MCF 10A (cell line): ENCODE measurements at regions of chr5 and their contacts with region 1.

Region 1: DNA sequence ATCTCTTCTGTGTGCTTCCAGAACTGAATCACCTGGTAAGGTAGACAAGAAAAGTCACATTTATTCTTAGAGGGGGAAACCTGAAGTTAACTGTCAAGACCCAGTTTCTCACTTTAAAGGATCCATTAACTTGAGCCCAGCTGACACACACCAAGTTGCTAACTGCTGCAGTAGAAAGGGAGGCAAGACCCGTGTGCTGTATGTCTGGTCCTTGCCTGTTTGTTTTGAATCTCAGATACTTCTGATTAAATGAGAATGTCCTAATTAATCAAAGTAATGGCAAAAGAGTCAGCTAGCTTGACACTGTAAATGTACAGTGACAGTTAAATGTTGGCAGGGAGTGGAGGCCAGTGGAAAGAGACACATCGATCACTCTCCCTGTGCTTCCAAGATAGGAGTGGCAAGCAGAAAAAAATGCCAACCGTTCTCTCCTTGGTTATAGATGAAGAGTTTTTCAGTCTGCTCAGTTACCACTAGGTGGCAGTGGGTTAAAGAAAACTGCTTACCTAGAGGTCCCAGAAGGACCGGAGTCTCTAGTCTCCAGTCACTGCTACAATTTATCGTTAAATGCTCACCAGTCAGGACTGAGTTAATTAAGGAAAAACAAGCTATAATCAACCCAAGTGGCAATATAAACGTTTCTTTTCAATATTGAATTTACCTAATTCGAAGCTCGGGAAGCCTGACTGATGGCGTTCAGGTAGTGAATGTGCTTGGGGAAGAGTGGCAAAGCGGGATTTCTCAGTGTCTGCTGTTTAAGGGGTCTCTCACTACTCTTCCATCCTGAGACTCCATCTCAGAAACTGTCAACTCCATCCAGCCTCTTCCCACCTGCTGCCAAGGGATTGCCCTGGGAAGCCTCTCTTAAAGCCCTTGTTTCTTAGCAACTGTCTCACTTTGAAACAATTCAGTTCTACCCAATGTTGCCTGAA is 18.4 kb downstream of the LSM11 start:
- DNase-seq: peak; percentile 79
- H3K4me3 Mint-ChIP-seq: no peak overlapping the region
- H3K27ac Mint-ChIP-seq: no peak overlapping the region
- H3K4me1 Mint-ChIP-seq: peaks cover 1% of the 10 kb centered on the region
- H3K27me3 Mint-ChIP-seq: no peaks in the 10 kb centered on the region
- CTCF ChIP-seq: peak; percentile 91

Region 2: GRCh38 chr5:157659868-157660660 is 101.9 kb before region 1 on chr5:
- CTCF ChIA-PET with region 1: no interaction called
- POLR2A ChIA-PET with region 1: no interaction called
- intact Hi-C with region 1: no loop called
- DNase-seq: no peak
- H3K4me3 Mint-ChIP-seq: no peak overlapping the region
- H3K27ac Mint-ChIP-seq: no peak overlapping the region
- H3K4me1 Mint-ChIP-seq: no peaks in the 10 kb centered on the region
- H3K27me3 Mint-ChIP-seq: no peaks in the 10 kb centered on the region
- CTCF ChIP-seq: no peak

Region 3: GRCh38 chr5:157772127-157772526 is 10.2 kb after region 1 on chr5:
- CTCF ChIA-PET with region 1: interaction called, 52 read pairs
- POLR2A ChIA-PET with region 1: interaction called, 6 read pairs
- intact Hi-C with region 1: no loop called
- DNase-seq: no peak
- H3K4me3 Mint-ChIP-seq: no peak overlapping the region
- H3K27ac Mint-ChIP-seq: no peak overlapping the region
- H3K4me1 Mint-ChIP-seq: peaks cover 15% of the 10 kb centered on the region
- H3K27me3 Mint-ChIP-seq: no peaks in the 10 kb centered on the region
- CTCF ChIP-seq: no peak

Region 4: DNA sequence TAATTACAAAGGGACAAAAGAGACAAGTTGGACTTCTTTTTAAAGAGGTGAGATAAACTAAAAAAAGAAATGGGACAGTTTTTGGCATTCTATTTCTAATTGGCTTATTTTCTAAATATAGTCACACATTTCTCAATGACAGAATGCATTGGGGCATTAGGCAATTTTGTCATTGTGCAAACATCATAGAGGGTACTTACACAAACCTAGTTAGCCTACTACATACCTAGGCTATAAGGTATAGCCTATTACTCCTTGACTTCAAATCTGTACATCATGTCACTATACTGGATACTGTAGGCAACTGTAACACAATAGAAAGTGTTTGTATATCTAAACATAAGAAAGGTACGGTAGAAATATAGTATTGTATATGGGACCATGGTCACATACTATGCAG is 37.6 kb after region 1 on chr5:
- CTCF ChIA-PET with region 1: interaction called, 19 read pairs
- POLR2A ChIA-PET with region 1: interaction called, 6 read pairs
- intact Hi-C with region 1: no loop called
- DNase-seq: peak; percentile 30
- H3K4me3 Mint-ChIP-seq: no peak overlapping the region
- H3K27ac Mint-ChIP-seq: no peak overlapping the region
- H3K4me1 Mint-ChIP-seq: no peaks in the 10 kb centered on the region
- H3K27me3 Mint-ChIP-seq: no peaks in the 10 kb centered on the region
- CTCF ChIP-seq: no peak

Region 5: DNA sequence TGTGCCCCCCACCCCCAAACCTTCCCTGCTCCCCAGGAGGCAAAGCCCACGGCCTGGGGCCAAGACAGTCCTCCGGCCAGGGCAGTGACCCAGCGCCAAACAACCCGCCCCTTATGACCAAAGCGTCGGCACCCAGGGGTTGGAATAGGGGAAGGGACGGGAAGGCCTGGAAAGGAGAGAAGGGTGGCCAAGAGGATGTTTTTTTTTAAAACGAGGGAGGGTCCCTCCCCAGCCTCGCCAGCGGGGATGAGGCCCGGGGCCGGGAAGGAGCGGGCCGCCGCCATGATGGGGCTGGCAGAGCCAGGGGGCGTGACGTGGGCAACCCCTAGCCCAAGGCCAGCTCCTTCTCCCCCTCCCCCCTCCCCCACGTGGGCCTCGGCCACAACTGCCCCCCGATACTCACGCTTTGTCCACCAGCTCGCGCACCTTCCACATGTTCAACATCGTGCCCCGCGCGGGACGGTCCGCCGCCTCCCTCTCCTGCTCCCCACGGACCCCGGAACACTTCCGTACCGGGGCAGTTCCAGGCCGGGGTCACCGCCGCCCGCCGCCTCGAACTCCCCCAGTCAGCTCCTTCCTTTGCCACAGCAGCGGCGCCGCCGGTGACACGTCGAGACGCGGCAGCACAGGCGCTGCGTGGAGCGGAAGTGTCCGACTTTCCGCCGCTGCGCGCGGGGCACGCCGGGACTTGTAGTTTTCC is 96.7 kb after region 1 on chr5 and contains the start of gene CLINT1:
- CTCF ChIA-PET with region 1: interaction called, 10 read pairs
- POLR2A ChIA-PET with region 1: no interaction called
- intact Hi-C with region 1: no loop called
- DNase-seq: peak; percentile 92
- H3K4me3 Mint-ChIP-seq: peak within 1 kb of the TSS; percentile 96
- H3K27ac Mint-ChIP-seq: peak within 1 kb of the TSS; percentile 99
- H3K4me1 Mint-ChIP-seq: peaks cover 22% of the 10 kb centered on the region
- H3K27me3 Mint-ChIP-seq: no peaks in the 10 kb centered on the region
- CTCF ChIP-seq: no peak
- total RNA-seq, gene CLINT1: 170 and 176 TPM in 2 replicates

Region 6: GRCh38 chr5:158074992-158075769 is 313.2 kb after region 1 on chr5:
- CTCF ChIA-PET with region 1: interaction called, 5 read pairs
- POLR2A ChIA-PET with region 1: no interaction called
- intact Hi-C with region 1: loop called (anchors 5 kb)
- DNase-seq: peak; percentile 73
- H3K4me3 Mint-ChIP-seq: no peak overlapping the region
- H3K27ac Mint-ChIP-seq: peak overlapping the region; percentile 61
- H3K4me1 Mint-ChIP-seq: peaks cover 7% of the 10 kb centered on the region
- H3K27me3 Mint-ChIP-seq: no peaks in the 10 kb centered on the region
- CTCF ChIP-seq: peak; percentile 91

Region 7: GRCh38 chr5:159133041-159133741 is 1371.2 kb after region 1 on chr5:
- CTCF ChIA-PET with region 1: interaction called, 24 read pairs
- POLR2A ChIA-PET with region 1: no interaction called
- intact Hi-C with region 1: loop called (anchors 1 kb)
- DNase-seq: peak; percentile 80
- H3K4me3 Mint-ChIP-seq: no peak overlapping the region
- H3K27ac Mint-ChIP-seq: no peak overlapping the region
- H3K4me1 Mint-ChIP-seq: peaks cover 7% of the 10 kb centered on the region
- H3K27me3 Mint-ChIP-seq: no peaks in the 10 kb centered on the region
- CTCF ChIP-seq: peak; percentile 92